A549 (cell line): ENCODE measurements at regions of chr2 and their contacts with region 1.

Region 1: GRCh38 chr2:44087036-44087713 is 81.5 kb upstream of the PPM1B start:
- DNase-seq: peak; percentile 79 to 87
- ATAC-seq: peak; percentile 93 to 97
- H3K4me3 ChIP-seq: peak overlapping the region; percentile 36
- H3K27ac ChIP-seq: peak overlapping the region; percentile 70 to 86
- H3K4me1 ChIP-seq: peaks cover 14% of the 10 kb centered on the region
- CTCF ChIP-seq: peak; percentile 98
- EP300 ChIP-seq: no peak
- POLR2A ChIP-seq: no peak
- RAD21 ChIP-seq: peak; percentile 99

Region 2: DNA sequence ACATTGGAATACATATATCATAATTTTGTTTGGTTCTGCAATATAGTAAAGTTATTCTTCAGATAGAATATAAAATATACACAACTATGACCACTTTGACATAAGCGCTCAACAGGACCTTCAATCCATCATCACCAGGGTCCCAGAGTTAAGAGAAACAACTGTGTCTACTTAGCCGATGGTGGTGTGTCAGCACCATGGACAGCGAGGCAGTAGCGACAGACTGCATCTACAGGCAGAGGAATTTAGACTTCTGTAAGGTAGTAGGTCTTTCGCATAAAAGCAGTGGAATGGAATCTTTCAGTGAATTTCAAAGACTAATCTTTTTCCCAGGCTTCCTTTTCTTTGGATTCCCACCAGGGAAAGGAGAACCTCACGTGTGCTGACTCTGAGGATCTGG is 70.9 kb before region 1 on chr2:
- CTCF ChIA-PET with region 1: no interaction called
- POLR2A ChIA-PET with region 1: no interaction called
- DNase-seq: peak in 1 of 2 experiments; percentile 46
- ATAC-seq: peak; percentile 74 to 78; a peak in 5 of 6 replicates
- H3K4me3 ChIP-seq: no peak overlapping the region
- H3K27ac ChIP-seq: no peak overlapping the region
- H3K4me1 ChIP-seq: no peaks in the 10 kb centered on the region
- CTCF ChIP-seq: no peak
- EP300 ChIP-seq: no peak
- POLR2A ChIP-seq: no peak
- RAD21 ChIP-seq: no peak

Region 3: GRCh38 chr2:44061876-44062275 is 25.3 kb before region 1 on chr2:
- CTCF ChIA-PET with region 1: interaction called, 16 read pairs
- POLR2A ChIA-PET with region 1: no interaction called
- DNase-seq: peak in 1 of 2 experiments; percentile 26
- ATAC-seq: peak; percentile 69 to 73; a peak in 4 of 6 replicates
- H3K4me3 ChIP-seq: no peak overlapping the region
- H3K27ac ChIP-seq: peak overlapping the region; percentile 23 to 57; a peak in 1 of 6 replicates
- H3K4me1 ChIP-seq: peaks cover 24% of the 10 kb centered on the region
- CTCF ChIP-seq: no peak
- EP300 ChIP-seq: no peak
- POLR2A ChIP-seq: no peak
- RAD21 ChIP-seq: no peak

Region 4: GRCh38 chr2:44075541-44075940 is 11.6 kb before region 1 on chr2:
- CTCF ChIA-PET with region 1: interaction called, 36 read pairs
- POLR2A ChIA-PET with region 1: no interaction called
- DNase-seq: peak in 1 of 2 experiments; percentile 38
- ATAC-seq: peak in 1 of 2 experiments; percentile 24; a peak in 2 of 6 replicates
- H3K4me3 ChIP-seq: no peak overlapping the region
- H3K27ac ChIP-seq: no peak overlapping the region
- H3K4me1 ChIP-seq: no peaks in the 10 kb centered on the region
- CTCF ChIP-seq: no peak
- EP300 ChIP-seq: no peak
- POLR2A ChIP-seq: no peak
- RAD21 ChIP-seq: no peak

Region 5: GRCh38 chr2:44098050-44098449 is 10.9 kb after region 1 on chr2:
- CTCF ChIA-PET with region 1: interaction called, 16 read pairs
- POLR2A ChIA-PET with region 1: no interaction called
- DNase-seq: no peak
- ATAC-seq: no peak
- H3K4me3 ChIP-seq: no peak overlapping the region
- H3K27ac ChIP-seq: no peak overlapping the region
- H3K4me1 ChIP-seq: peaks cover 13% of the 10 kb centered on the region
- CTCF ChIP-seq: no peak
- EP300 ChIP-seq: no peak
- POLR2A ChIP-seq: no peak
- RAD21 ChIP-seq: no peak

Region 6: DNA sequence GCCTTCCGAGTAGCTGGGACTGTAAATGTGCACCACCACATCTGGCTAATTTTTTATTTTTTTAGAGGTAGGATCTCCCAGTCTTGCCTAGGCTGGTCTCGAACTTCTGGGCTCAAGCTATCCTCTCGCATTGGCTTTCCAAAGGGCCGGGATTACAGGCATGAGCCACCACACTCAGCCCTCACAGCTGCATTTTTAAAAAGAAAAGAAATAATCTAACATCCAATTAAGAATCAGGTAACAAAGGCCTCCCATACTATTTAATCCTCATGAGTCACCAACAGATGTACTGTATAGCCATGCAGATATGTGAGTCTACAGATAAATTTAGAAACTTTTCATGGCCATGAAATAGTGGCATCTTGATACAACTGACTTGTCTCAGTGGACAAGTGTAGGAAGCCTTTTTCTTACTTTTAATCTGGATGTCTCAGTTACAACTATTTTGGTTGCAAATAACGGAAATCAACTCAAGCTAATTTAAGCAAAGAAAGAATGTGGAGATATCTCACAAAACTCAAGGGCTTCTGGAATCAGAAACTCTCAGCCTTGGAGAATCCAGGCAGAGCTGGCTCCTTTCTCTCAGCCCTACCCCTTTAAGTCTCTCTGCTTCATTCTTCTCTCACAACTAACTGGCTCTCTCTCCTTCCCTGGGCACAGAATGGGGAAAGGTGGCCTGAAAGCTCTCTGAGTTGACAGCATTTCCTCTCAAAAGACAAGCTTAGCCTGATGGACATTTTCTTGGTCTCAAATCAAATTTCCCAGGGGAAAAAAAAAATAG is 68.7 kb after region 1 on chr2:
- CTCF ChIA-PET with region 1: interaction called, 11 read pairs
- POLR2A ChIA-PET with region 1: no interaction called
- DNase-seq: no peak
- ATAC-seq: peak in 1 of 2 experiments; percentile 24; a peak in 1 of 6 replicates
- H3K4me3 ChIP-seq: no peak overlapping the region
- H3K27ac ChIP-seq: no peak overlapping the region
- H3K4me1 ChIP-seq: no peaks in the 10 kb centered on the region
- CTCF ChIP-seq: no peak
- EP300 ChIP-seq: no peak
- POLR2A ChIP-seq: no peak
- RAD21 ChIP-seq: no peak

Region 7: DNA sequence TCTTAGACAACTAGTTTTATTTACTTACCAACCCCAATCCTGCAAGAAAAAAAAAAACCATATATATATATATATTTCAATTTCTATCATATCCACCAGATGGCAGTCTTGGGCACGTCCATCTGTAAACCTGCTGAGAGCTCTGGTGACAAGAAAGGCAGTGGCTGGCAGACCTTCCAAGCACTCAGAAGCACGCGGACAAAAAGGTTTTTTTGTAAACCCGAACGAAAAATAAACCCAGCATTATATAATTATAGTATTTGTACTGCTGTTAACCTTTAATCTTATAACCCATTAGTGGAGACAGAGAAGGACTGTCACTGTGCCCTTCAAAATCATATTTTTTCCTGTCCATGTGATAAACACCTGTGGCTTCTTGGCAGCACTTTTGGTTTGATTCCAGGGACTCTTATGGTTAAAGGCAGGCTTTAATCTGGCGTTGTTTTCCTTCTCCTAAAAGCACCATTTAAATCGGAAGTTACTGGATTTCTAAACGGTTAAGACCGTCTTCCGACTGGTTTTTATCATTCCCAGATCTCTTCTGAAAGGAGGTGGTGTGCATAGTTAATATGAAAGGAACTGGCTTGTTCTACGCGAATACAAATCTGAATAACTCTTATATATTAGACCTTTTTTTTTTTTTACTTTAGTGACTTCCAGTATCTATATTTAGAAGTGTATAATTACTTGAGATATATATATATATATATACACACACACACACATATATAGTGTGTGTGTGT is 157.1 kb after region 1 on chr2:
- CTCF ChIA-PET with region 1: interaction called, 10 read pairs
- POLR2A ChIA-PET with region 1: no interaction called
- DNase-seq: peak; percentile 71 to 84
- ATAC-seq: peak; percentile 66 to 74; a peak in 4 of 6 replicates
- H3K4me3 ChIP-seq: peak overlapping the region; percentile 35
- H3K27ac ChIP-seq: peak overlapping the region; percentile 73 to 78
- H3K4me1 ChIP-seq: peaks cover 60% of the 10 kb centered on the region
- CTCF ChIP-seq: peak; percentile 94
- EP300 ChIP-seq: no peak
- POLR2A ChIP-seq: no peak
- RAD21 ChIP-seq: peak; percentile 81 to 94

Region 8: GRCh38 chr2:44342854-44343253 is 255.7 kb after region 1 on chr2:
- CTCF ChIA-PET with region 1: interaction called, 11 read pairs
- POLR2A ChIA-PET with region 1: no interaction called
- DNase-seq: peak; percentile 28 to 66
- ATAC-seq: peak; percentile 62 to 81; a peak in 3 of 6 replicates
- H3K4me3 ChIP-seq: no peak overlapping the region
- H3K27ac ChIP-seq: no peak overlapping the region
- H3K4me1 ChIP-seq: no peaks in the 10 kb centered on the region
- CTCF ChIP-seq: peak; percentile 68
- EP300 ChIP-seq: no peak
- POLR2A ChIP-seq: no peak
- RAD21 ChIP-seq: peak; percentile 77 to 93